ENCODE measurements at regions of chr3 and their contacts with region 1.

Region 1: DNA sequence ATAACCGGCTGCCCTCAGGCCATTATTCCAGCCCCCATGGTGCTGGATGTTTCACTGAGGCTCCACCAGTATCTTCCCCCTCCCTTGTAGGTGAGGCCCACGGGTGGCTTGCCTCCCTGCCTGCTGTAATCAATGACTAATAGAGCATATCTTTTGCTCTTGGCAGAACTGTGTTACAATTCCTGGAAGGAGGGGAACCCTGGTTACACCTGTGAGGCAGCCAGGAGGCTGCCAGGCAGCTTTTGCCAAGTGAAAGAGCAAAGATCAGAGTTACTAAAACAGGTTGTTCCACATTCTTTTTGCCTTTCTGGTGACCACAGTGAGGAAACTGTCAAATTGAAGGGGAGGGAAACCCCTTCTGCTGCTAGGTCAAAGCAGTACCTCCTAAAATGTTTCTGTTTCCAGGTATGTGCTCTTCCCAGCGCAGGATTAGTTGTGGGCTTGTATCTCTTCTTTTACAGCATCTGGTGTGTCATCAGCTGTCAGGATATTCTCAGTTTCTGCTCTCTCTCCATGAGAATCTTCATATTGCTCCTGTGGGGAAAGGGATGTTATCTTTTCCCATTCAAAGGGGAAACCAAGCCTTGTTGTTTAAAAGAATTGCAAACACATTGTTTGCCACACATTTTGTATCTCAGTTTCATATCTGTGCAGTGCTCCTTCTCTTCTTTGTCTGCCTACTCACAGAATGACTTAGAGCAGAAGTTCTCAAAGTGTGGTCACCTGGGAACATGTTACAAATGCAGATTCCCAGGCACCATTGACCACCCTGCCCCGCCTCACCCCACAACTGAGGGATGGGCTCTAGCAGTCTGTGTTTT is 137.4 kb upstream of the UMPS start:
- DNase-seq: peak; percentile 87 to 98
- H3K4me3 ChIP-seq: no peak overlapping the region
- H3K27ac ChIP-seq: no peak overlapping the region; the same call in 1 of the 2 replicates
- H3K4me1 ChIP-seq: peaks cover 25% of the 10 kb centered on the region
- H3K27me3 ChIP-seq: no peaks in the 10 kb centered on the region
- CTCF ChIP-seq: no peak

Region 2: GRCh38 chr3:124627501-124627908 is 34.7 kb after region 1 on chr3:
- CTCF ChIA-PET with region 1: no interaction called
- POLR2A ChIA-PET with region 1: no interaction called
- intact Hi-C with region 1: loop called (anchors 2 kb)
- DNase-seq: peak; percentile 39 to 58
- H3K4me3 ChIP-seq: no peak overlapping the region
- H3K27ac ChIP-seq: no peak overlapping the region
- H3K4me1 ChIP-seq: peaks cover 10% of the 10 kb centered on the region
- H3K27me3 ChIP-seq: no peaks in the 10 kb centered on the region
- CTCF ChIP-seq: no peak

Region 3: GRCh38 chr3:125460233-125460632 is 867.4 kb after region 1 on chr3:
- CTCF ChIA-PET with region 1: no interaction called
- POLR2A ChIA-PET with region 1: no interaction called
- intact Hi-C with region 1: no loop called
- DNase-seq: no peak
- H3K4me3 ChIP-seq: no peak overlapping the region
- H3K27ac ChIP-seq: no peak overlapping the region
- H3K4me1 ChIP-seq: no peaks in the 10 kb centered on the region
- H3K27me3 ChIP-seq: no peaks in the 10 kb centered on the region
- CTCF ChIP-seq: no peak

Measured in PC-9 (cell line).